GM12878 (cell line): ENCODE measurements at regions of chr11 and their contacts with region 1.

Region 1: GRCh38 chr11:121435551-121436511 is 16.3 kb upstream of the SORL1 start:
- DNase-seq: no peak
- ATAC-seq: no peak
- H3K4me3 ChIP-seq: no peak overlapping the region
- H3K27ac ChIP-seq: no peak overlapping the region
- H3K4me1 ChIP-seq: peaks cover 12% of the 10 kb centered on the region
- H3K27me3 ChIP-seq: no peaks in the 10 kb centered on the region
- CTCF ChIP-seq: no peak
- EP300 ChIP-seq: no peak
- POLR2A ChIP-seq: no peak
- RAD21 ChIP-seq: no peak

Region 2: GRCh38 chr11:121153472-121153871 is 282.4 kb before region 1 on chr11:
- CTCF ChIA-PET with region 1: no interaction called
- POLR2A ChIA-PET with region 1: no interaction called
- RAD21 ChIA-PET with region 1: no interaction called
- SMC1A ChIA-PET with region 1: no interaction called
- in situ Hi-C with region 1: no loop called
- intact Hi-C with region 1: no loop called
- DNase-seq: no peak
- ATAC-seq: no peak
- H3K4me3 ChIP-seq: no peak overlapping the region
- H3K27ac ChIP-seq: no peak overlapping the region
- H3K4me1 ChIP-seq: no peaks in the 10 kb centered on the region
- H3K27me3 ChIP-seq: no peaks in the 10 kb centered on the region; a peak in 2 of 4 replicates
- CTCF ChIP-seq: no peak
- EP300 ChIP-seq: no peak
- POLR2A ChIP-seq: no peak
- RAD21 ChIP-seq: no peak

Region 3: DNA sequence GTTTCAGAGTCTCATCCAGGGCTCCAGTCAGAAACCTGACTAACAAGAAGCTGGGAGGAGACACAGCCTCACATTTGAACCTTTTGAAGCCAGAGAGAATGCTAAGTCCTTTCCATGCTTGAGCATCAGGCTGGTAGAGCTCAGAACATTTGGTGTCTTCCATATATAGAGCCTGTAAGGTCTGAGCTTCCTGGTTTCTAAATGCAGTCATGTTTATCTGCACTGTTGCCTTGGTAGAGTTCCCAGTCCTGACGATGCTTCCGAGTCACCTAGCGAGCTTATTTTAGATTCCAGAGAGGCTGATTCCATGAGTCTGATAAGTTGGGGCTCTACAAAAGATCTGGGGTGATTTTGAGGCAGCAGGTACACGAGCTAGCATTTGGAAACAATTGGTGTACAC is 52.1 kb before region 1 on chr11:
- CTCF ChIA-PET with region 1: interaction called, 12 read pairs
- POLR2A ChIA-PET with region 1: no interaction called
- RAD21 ChIA-PET with region 1: no interaction called
- SMC1A ChIA-PET with region 1: no interaction called
- in situ Hi-C with region 1: no loop called
- intact Hi-C with region 1: no loop called
- DNase-seq: no peak
- ATAC-seq: no peak
- H3K4me3 ChIP-seq: no peak overlapping the region
- H3K27ac ChIP-seq: no peak overlapping the region
- H3K4me1 ChIP-seq: no peaks in the 10 kb centered on the region
- H3K27me3 ChIP-seq: no peaks in the 10 kb centered on the region
- CTCF ChIP-seq: no peak
- EP300 ChIP-seq: no peak
- POLR2A ChIP-seq: no peak
- RAD21 ChIP-seq: no peak

Region 4: DNA sequence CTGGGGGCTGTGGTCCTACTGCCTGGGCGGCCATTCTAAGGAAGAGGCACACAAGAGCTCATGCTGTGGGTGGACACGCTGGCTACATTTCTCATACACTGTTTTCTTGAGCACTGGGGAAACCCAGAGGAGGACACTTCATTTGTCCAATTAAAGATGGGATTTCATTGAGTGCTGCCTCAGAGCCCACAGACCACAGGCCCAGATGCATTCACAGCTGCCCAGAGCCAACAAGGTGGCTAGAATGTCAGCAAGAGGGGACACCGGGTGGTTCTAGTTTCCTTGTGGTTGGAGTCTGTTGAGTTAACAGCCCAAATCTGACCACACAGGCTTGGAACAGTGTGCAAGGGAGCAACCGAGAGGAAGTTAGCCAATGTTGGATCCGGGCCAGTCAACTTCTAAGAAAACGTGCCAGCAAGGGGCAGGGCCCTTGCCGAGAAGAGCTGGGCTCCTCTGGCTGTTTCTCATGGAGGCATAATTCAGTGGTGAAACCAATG is 18.7 kb before region 1 on chr11:
- CTCF ChIA-PET with region 1: interaction called, 21 read pairs
- POLR2A ChIA-PET with region 1: interaction called, 8 read pairs
- RAD21 ChIA-PET with region 1: interaction called, 14 read pairs
- SMC1A ChIA-PET with region 1: interaction called, 68 read pairs
- in situ Hi-C with region 1: no loop called
- intact Hi-C with region 1: no loop called
- DNase-seq: peak; percentile 92
- ATAC-seq: peak; percentile 87
- H3K4me3 ChIP-seq: no peak overlapping the region
- H3K27ac ChIP-seq: peak overlapping the region; percentile 9; the same call in 1 of the 2 replicates
- H3K4me1 ChIP-seq: peaks cover 45% of the 10 kb centered on the region
- H3K27me3 ChIP-seq: no peaks in the 10 kb centered on the region
- CTCF ChIP-seq: no peak
- EP300 ChIP-seq: peak; percentile 26 to 71; a peak in 2 of 4 replicates
- POLR2A ChIP-seq: no peak
- RAD21 ChIP-seq: no peak

Region 5: GRCh38 chr11:121503051-121503450 is 67.2 kb after region 1 on chr11:
- CTCF ChIA-PET with region 1: no interaction called
- POLR2A ChIA-PET with region 1: no interaction called
- RAD21 ChIA-PET with region 1: no interaction called
- SMC1A ChIA-PET with region 1: no interaction called
- in situ Hi-C with region 1: no loop called
- intact Hi-C with region 1: no loop called
- DNase-seq: no peak
- ATAC-seq: no peak
- H3K4me3 ChIP-seq: no peak overlapping the region
- H3K27ac ChIP-seq: no peak overlapping the region
- H3K4me1 ChIP-seq: no peaks in the 10 kb centered on the region
- H3K27me3 ChIP-seq: no peaks in the 10 kb centered on the region
- CTCF ChIP-seq: no peak
- EP300 ChIP-seq: no peak
- POLR2A ChIP-seq: no peak
- RAD21 ChIP-seq: no peak